CD4-positive, alpha-beta memory T cell (primary cell): ENCODE measurements at regions of chr3 and their contacts with region 1.

Region 1: DNA sequence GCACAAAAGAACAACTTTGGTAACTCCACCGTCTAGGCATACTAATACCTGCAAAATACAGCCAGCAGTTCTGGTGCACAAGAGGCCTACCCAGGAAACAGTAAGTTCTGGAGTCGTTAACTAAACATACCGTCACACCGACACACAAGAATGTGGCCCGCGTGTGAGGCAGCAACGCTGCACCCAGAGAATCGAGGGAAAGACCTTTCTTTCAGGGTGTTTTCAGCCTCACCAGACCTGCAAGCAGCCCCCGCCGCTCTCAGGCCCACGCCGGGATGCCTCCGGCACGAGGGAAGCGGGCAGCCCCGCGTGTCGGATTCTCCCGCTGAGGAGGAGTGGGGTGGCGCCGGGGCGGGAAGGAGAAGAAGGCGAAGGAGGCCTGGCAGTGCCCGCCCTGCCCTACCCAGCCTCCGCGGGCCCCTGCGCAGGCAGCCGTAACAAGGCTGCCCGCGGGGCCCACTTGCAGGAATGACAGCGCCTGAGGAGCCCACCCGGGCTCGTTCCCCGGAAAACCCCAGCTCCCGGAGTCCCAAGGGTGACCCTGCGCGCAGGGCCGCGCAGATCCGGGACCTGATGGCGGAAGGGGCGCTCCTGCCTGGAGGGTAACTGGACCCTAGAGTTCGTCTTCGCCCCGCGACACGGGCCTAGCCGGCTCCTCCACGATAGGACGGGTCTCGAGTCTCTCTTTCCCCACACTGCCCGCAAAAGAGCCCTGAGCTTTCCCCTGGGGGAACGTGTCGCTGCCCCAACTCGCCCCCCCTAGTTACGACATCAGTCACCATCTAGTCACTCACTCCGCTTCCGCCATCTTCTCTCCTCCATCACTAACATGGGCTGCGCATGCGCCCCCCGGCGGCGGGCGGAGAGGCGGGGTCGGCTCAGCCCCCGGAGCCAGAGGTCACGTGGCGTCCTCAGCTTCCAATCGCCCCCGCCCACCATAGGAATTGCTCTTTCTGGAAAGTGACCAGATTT is at the start of gene PHC3:
- DNase-seq: peak; percentile 91 to 92 (median 91)
- H3K4me3 ChIP-seq: peak within 1 kb of the TSS; percentile 48 to 97
- H3K4me3 Mint-ChIP-seq: peak within 1 kb of the TSS; percentile 96 to 100 (median 99)
- H3K27ac ChIP-seq: peak within 1 kb of the TSS; percentile 98
- H3K27ac Mint-ChIP-seq: peak within 1 kb of the TSS; percentile 99 to 100 (median 100)
- H3K4me1 ChIP-seq: peaks cover 40% of the 10 kb centered on the region
- H3K4me1 Mint-ChIP-seq: peaks cover 23 to 41% (median 32%) of the 10 kb centered on the region in 4 donors
- H3K27me3 ChIP-seq: no peaks in the 10 kb centered on the region
- H3K27me3 Mint-ChIP-seq: no peaks in the 10 kb centered on the region
- total RNA-seq, gene PHC3: 168 to 173 TPM

Region 2: DNA sequence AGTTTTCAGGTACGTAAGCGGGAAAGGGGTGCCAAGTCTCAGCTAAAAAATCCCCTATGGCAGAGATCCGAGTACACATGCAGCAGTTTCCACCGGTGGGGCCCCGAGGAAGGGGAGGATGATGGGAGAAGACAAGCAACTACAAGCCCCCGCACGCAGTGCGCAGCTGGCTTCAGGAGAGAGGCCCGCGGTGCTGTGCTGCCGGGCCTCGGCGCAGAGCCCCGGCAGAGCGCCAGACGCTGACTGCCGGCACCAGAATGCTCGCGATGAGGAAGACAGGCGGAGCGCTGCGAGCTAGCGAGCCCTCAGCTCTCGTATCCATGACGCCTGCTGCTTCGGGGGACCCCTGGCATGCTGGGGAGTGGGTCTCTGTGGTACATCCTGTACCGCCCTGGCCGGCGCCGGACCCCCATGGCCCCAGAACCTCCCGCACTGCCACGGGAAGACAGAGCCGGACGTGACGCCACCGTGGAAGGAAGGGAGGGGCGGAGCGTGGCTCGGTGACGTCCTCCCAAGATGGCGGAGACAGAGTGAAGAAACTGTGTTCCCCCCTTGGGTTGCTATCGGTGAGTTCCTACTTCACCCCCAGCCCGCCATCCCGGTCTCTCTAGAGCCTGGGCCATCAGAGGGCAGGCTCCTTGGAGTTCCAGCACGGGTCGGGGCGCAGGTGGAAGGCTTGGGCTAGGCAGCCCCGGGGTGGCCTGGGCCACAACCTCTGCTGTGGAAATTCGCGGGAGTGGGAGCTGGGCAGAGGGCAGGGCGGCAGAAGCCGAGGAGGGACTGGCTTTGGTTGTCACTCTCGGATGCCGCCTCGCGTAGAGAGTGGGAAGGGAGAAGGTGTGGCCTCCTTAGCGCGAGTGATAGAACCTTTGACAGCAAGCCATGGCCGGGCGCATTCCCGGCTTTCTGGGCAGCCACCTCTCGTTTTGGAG is 408.0 kb before region 1 on chr3 and contains the start of gene MYNN:
- CTCF ChIA-PET with region 1: no interaction called
- POLR2A ChIA-PET with region 1: interaction called, 18 read pairs
- intact Hi-C with region 1: loop called (anchors 1 kb)
- DNase-seq: peak; percentile 92 to 95 (median 94)
- H3K4me3 ChIP-seq: peak within 1 kb of the TSS; percentile 83 to 94
- H3K4me3 Mint-ChIP-seq: peak within 1 kb of the TSS; percentile 92 to 99 (median 98)
- H3K27ac ChIP-seq: peak within 1 kb of the TSS; percentile 99
- H3K27ac Mint-ChIP-seq: peak within 1 kb of the TSS; percentile 98 to 100 (median 99)
- H3K4me1 ChIP-seq: peaks cover 36% of the 10 kb centered on the region
- H3K4me1 Mint-ChIP-seq: peaks cover 27 to 70% (median 43%) of the 10 kb centered on the region in 4 donors
- H3K27me3 ChIP-seq: no peaks in the 10 kb centered on the region
- H3K27me3 Mint-ChIP-seq: peaks cover 0 to 11% of the 10 kb centered on the region in 2 donors
- total RNA-seq, gene MYNN: 21.1 to 23.0 TPM

Region 3: GRCh38 chr3:169836078-169836941 is 344.9 kb before region 1 on chr3:
- CTCF ChIA-PET with region 1: no interaction called
- POLR2A ChIA-PET with region 1: no interaction called
- intact Hi-C with region 1: no loop called
- DNase-seq: no peak
- H3K4me3 ChIP-seq: no peak overlapping the region
- H3K4me3 Mint-ChIP-seq: no peak overlapping the region
- H3K27ac ChIP-seq: no peak overlapping the region
- H3K27ac Mint-ChIP-seq: no peak overlapping the region
- H3K4me1 ChIP-seq: no peaks in the 10 kb centered on the region
- H3K4me1 Mint-ChIP-seq: no peaks in the 10 kb centered on the region
- H3K27me3 ChIP-seq: no peaks in the 10 kb centered on the region
- H3K27me3 Mint-ChIP-seq: peaks cover 7 to 14% of the 10 kb centered on the region in 2 donors

Region 4: GRCh38 chr3:169863458-169863899 is 317.7 kb before region 1 on chr3:
- CTCF ChIA-PET with region 1: no interaction called
- POLR2A ChIA-PET with region 1: no interaction called
- intact Hi-C with region 1: loop called (anchors 5 kb)
- DNase-seq: peak; percentile 54 to 71 (median 66)
- H3K4me3 ChIP-seq: no peak overlapping the region
- H3K4me3 Mint-ChIP-seq: no peak overlapping the region
- H3K27ac ChIP-seq: no peak overlapping the region
- H3K27ac Mint-ChIP-seq: peak overlapping the region in 2 of 7 donors; percentile 23 to 38
- H3K4me1 ChIP-seq: peaks cover 7% of the 10 kb centered on the region
- H3K4me1 Mint-ChIP-seq: peaks cover 4 to 15% (median 4%) of the 10 kb centered on the region in 4 donors
- H3K27me3 ChIP-seq: no peaks in the 10 kb centered on the region
- H3K27me3 Mint-ChIP-seq: peaks cover 3 to 9% of the 10 kb centered on the region in 2 donors

Region 5: DNA sequence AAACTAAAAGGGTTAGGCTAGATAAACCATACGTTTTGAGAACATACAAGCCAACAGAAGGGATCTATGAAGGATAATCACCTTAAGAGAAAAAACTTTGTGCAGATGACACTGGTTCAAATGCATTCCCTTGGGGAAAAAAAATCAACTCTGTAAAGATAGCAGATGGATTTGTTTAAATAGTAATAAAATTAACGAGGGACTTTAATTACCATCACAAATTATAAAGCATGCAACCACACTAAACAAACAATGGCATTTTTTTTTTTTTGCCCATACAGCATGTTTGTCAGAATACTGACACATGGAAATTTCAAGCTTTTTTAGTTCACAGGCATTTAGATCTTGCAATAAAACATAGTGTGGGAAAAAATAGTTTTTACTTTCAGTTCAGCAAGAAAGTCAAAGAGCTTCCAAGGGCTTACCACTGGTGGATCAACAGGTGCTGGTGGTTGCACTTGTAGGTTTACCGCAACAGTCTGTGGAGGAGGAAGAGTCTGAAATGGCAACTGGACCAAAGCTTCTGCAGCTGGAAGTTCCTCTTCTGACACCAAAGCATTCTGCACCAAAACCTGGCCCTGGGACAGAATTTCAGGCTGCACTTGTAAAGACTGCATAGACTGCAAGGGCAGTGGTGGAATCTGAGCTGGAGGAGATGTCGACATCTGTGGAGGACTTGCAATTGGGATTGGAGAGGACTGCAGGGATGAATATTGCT is 52.8 kb before region 1 on chr3:
- CTCF ChIA-PET with region 1: no interaction called
- POLR2A ChIA-PET with region 1: no interaction called
- intact Hi-C with region 1: no loop called
- DNase-seq: peak in 2 of 5 donors; percentile 4 to 12
- H3K4me3 ChIP-seq: no peak overlapping the region
- H3K4me3 Mint-ChIP-seq: peak overlapping the region in 7 of 8 donors; percentile 32 to 71 (median 59)
- H3K27ac ChIP-seq: no peak overlapping the region
- H3K27ac Mint-ChIP-seq: peak overlapping the region; percentile 36 to 89 (median 62)
- H3K4me1 ChIP-seq: peaks cover 23% of the 10 kb centered on the region
- H3K4me1 Mint-ChIP-seq: peaks cover 17 to 21% (median 21%) of the 10 kb centered on the region in 4 donors
- H3K27me3 ChIP-seq: no peaks in the 10 kb centered on the region
- H3K27me3 Mint-ChIP-seq: no peaks in the 10 kb centered on the region

Region 6: DNA sequence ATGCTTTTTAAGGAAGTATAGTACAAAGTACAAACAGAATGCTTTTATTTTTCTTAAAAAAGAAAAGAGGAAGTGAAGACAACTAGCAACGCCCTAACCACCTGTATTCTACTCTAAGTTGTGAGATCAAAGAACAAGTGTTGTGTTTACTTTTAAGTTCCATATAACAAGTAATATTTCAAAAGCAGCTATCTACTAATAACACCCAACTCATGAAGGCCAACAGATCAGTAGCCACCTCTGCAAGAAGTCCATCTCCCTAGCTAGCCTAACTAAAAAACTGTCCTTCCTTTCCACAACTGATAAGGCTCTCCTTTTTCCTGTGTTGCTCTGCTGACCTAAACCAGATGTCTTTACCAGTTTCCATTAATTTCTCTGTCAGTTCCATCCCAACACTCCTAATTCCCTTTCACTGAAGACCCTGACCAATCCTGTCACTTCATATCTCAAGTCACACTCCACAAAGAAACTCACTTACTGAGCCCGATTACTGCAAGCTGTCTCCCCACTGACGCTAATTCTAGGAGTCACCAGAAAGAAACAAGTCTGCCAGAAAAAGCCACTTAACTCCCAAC is 26.5 kb before region 1 on chr3:
- CTCF ChIA-PET with region 1: interaction called, 3 read pairs
- POLR2A ChIA-PET with region 1: interaction called, 32 read pairs
- intact Hi-C with region 1: no loop called
- DNase-seq: peak in 2 of 5 donors; percentile 4 to 20
- H3K4me3 ChIP-seq: no peak overlapping the region
- H3K4me3 Mint-ChIP-seq: peak overlapping the region; percentile 58 to 83 (median 78)
- H3K27ac ChIP-seq: peak overlapping the region; percentile 43
- H3K27ac Mint-ChIP-seq: peak overlapping the region; percentile 70 to 97 (median 92)
- H3K4me1 ChIP-seq: peaks cover 62% of the 10 kb centered on the region
- H3K4me1 Mint-ChIP-seq: peaks cover 40 to 59% (median 51%) of the 10 kb centered on the region in 4 donors
- H3K27me3 ChIP-seq: no peaks in the 10 kb centered on the region
- H3K27me3 Mint-ChIP-seq: no peaks in the 10 kb centered on the region

Region 7: DNA sequence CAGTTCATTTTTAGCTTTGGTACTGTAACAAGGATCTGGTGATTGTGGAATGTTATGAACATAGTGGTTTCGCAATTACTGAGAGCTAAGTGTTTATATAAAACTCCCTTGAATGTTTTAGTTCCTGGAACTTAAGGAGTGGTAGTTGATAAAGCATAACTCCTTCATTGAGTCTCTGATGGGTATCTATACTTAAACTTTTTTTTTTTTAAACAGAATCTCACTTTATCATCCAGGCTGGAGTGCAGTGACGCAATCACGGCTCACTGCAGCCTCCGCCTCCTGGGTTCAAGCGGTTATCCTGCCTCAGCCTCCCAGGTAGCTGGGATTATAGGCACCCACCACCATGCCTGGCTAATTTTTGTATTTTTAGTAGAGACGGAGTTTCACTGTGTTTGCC is 52.3 kb after region 1 on chr3:
- CTCF ChIA-PET with region 1: no interaction called
- POLR2A ChIA-PET with region 1: no interaction called
- intact Hi-C with region 1: no loop called
- DNase-seq: no peak
- H3K4me3 ChIP-seq: no peak overlapping the region
- H3K4me3 Mint-ChIP-seq: no peak overlapping the region
- H3K27ac ChIP-seq: no peak overlapping the region
- H3K27ac Mint-ChIP-seq: peak overlapping the region in 1 of 7 donors; percentile 60
- H3K4me1 ChIP-seq: no peaks in the 10 kb centered on the region
- H3K4me1 Mint-ChIP-seq: peaks cover 1 to 6% (median 5%) of the 10 kb centered on the region in 4 donors
- H3K27me3 ChIP-seq: no peaks in the 10 kb centered on the region
- H3K27me3 Mint-ChIP-seq: no peaks in the 10 kb centered on the region

Region 8: GRCh38 chr3:170357176-170357919 is 176.2 kb after region 1 on chr3 and contains the start of gene SKIL:
- CTCF ChIA-PET with region 1: interaction called, 4 read pairs
- POLR2A ChIA-PET with region 1: interaction called, 29 read pairs
- intact Hi-C with region 1: loop called (anchors 1 kb)
- DNase-seq: peak; percentile 96 to 98 (median 97)
- H3K4me3 ChIP-seq: peak within 1 kb of the TSS; percentile 57 to 62
- H3K4me3 Mint-ChIP-seq: peak within 1 kb of the TSS; percentile 90 to 99 (median 93)
- H3K27ac ChIP-seq: peak within 1 kb of the TSS; percentile 88
- H3K27ac Mint-ChIP-seq: peak within 1 kb of the TSS; percentile 95 to 99 (median 98)
- H3K4me1 ChIP-seq: peaks cover 32% of the 10 kb centered on the region
- H3K4me1 Mint-ChIP-seq: peaks cover 31 to 72% (median 43%) of the 10 kb centered on the region in 4 donors
- H3K27me3 ChIP-seq: no peaks in the 10 kb centered on the region
- H3K27me3 Mint-ChIP-seq: no peaks in the 10 kb centered on the region
- total RNA-seq, gene SKIL: 59.3 to 60.4 TPM

Region 9: DNA sequence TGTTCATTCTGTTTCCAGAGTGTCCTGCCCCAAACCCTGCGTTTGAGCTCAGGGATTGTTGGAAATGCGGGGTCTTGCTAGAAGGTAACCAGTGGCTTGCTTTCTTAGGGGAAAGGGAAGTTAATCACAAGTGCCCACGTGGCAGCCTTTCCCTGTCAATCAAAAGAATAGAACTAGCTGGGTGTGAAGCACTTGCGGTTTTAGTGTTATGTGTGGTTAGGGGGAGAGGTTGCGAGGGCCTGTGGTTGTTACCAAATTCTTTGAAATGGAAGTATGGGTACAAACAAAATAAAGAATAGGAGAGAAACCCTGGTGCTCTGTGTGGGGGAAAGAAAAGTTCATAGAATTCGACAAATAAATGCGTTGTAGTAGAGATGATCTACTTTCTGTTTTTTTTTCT is 1925.8 kb after region 1 on chr3:
- CTCF ChIA-PET with region 1: no interaction called
- POLR2A ChIA-PET with region 1: no interaction called
- intact Hi-C with region 1: loop called (anchors 10 kb)
- DNase-seq: peak; percentile 83 to 84 (median 84)
- H3K4me3 ChIP-seq: peak overlapping the region; percentile 1 to 56
- H3K4me3 Mint-ChIP-seq: peak overlapping the region; percentile 76 to 91 (median 81)
- H3K27ac ChIP-seq: peak overlapping the region; percentile 42
- H3K27ac Mint-ChIP-seq: peak overlapping the region; percentile 88 to 97 (median 94)
- H3K4me1 ChIP-seq: peaks cover 82% of the 10 kb centered on the region
- H3K4me1 Mint-ChIP-seq: peaks cover 67 to 85% (median 78%) of the 10 kb centered on the region in 4 donors
- H3K27me3 ChIP-seq: no peaks in the 10 kb centered on the region
- H3K27me3 Mint-ChIP-seq: no peaks in the 10 kb centered on the region